Activated T-helper 2 cell treated with anti-CD3 and anti-CD28 coated beads, Interferon-gamma antibody, Interleukin-2, Interleukin-4, amounts not matched to agents 10 μg/mL and 5 μg/mL and 100 μg/mL, durations not matched to agents 14 hours and 24 hours and 36 hours (primary cell): ENCODE measurements at regions of chr3 and their contacts with region 1.

Region 1: DNA sequence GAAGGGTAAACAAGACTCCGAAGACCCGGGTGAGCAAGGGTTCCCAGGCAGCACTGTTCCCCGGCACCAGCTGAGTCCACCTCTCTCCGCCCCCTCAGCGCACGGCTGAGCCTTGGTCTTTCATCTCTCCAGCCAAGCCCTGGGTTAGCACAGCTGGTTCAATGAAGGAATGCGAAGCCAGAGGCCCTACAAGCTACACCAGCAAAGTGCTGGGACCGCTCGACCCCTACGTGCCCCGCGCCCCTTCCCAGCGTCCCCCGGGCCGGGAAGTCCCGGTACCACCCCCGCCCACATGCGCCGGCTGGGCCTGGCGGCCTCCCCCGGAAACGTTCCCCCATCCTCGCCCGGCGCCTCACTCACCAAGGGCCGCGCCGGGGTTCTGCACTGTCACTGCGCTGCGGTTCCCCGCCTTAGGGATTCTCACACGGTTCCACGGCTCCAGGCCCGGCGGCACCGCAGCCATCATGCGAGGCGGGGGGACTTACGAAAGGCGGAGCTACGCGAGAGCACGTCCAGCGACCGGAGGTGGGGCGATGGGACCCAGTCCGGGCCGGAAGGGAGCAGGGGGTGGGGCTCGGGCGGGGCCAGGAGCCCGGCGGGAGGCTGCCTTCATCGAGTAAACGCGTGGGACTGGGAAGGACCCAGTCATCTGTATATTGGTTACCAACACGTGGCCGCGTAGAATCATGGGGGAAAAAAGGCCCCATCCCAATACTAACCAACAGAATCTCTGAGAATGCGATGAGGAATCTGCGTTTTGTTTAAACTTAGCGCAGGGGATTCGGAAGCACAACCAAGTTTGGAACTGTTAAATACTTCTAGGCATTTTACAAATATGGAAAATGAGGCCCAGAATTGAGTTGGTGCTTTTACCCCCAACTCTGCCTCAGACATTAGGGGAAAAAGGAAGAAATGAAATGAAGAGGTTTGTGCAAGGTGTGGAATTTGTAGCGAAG is 28.7 kb downstream of the GTPBP8 start:
- DNase-seq: peak; percentile 73
- H3K4me3 Mint-ChIP-seq: peak overlapping the region; percentile 93
- H3K27ac Mint-ChIP-seq: peak overlapping the region; percentile 94
- H3K4me1 Mint-ChIP-seq: peaks cover 38% of the 10 kb centered on the region
- H3K27me3 Mint-ChIP-seq: no peaks in the 10 kb centered on the region

Region 2: DNA sequence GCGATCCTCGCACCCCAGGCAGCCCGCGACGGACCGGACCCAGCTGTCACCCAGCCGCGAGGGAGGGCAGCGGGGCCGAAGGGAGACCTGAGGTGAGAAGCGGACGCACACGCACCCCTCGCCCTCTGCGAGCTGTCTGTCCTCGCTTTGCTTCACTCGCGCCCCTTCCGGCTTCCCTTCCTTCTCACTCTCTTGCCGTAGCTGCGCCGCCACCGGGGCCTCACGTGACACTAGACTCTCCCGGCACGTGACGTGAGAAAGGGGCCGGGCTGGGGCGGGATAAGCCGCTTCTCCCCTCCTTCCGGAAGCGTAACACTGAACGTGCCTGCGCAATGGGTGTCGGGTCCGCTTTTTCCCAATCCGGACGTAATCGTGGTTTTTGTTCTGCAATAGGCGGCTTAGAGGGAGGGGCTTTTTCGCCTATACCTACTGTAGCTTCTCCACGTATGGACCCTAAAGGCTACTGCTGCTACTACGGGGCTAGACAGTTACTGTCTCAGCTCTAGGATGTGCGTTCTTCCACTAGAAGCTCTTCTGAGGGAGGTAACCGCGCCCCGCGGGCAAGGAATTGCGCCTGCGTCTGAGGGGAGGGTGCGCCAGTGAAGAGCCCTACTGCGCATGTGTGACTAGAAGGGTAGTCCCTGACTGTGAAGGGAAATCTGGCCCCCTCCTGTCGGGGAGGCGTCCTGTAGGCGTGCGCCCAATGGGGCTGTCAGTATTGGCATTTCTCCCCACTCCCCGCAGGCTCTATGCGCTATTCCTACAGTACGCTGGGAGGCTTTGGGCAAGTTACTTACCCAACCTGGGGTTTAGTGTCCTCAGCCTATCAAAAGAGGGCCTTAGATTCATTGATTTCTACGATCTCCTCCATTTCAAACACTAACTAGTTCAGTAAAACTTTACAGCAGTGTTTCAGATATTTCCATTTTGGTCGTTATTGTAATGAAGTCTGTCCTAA is 457.4 kb before region 1 on chr3 and contains the starts of genes ATG3 and SLC35A5:
- intact Hi-C with region 1: loop called (anchors 1 kb)
- DNase-seq: peak; percentile 98
- H3K4me3 Mint-ChIP-seq: peak within 1 kb of the TSS; percentile 92
- H3K27ac Mint-ChIP-seq: peak within 1 kb of the TSS; percentile 99
- H3K4me1 Mint-ChIP-seq: peaks cover 49% of the 10 kb centered on the region
- H3K27me3 Mint-ChIP-seq: no peaks in the 10 kb centered on the region
- total RNA-seq, gene ATG3: 61.1 and 61.6 TPM in 2 replicates
- total RNA-seq, gene SLC35A5: 12.6 and 17.8 TPM in 2 replicates

Region 3: GRCh38 chr3:112990672-112991602 is 28.5 kb before region 1 on chr3 and contains the start of gene GTPBP8:
- intact Hi-C with region 1: loop called (anchors 1 kb)
- DNase-seq: peak; percentile 79
- H3K4me3 Mint-ChIP-seq: peak within 1 kb of the TSS; percentile 80
- H3K27ac Mint-ChIP-seq: peak within 1 kb of the TSS; percentile 84
- H3K4me1 Mint-ChIP-seq: peaks cover 49% of the 10 kb centered on the region
- H3K27me3 Mint-ChIP-seq: no peaks in the 10 kb centered on the region
- total RNA-seq, gene GTPBP8: 17.6 and 22.7 TPM in 2 replicates

Region 4: GRCh38 chr3:113005611-113006010 is 13.8 kb before region 1 on chr3:
- intact Hi-C with region 1: loop called (anchors 1 kb)
- DNase-seq: no peak
- H3K4me3 Mint-ChIP-seq: peak overlapping the region; percentile 66
- H3K27ac Mint-ChIP-seq: peak overlapping the region; percentile 84
- H3K4me1 Mint-ChIP-seq: peaks cover 66% of the 10 kb centered on the region
- H3K27me3 Mint-ChIP-seq: no peaks in the 10 kb centered on the region

Region 5: GRCh38 chr3:113057117-113057516 is 37.7 kb after region 1 on chr3:
- intact Hi-C with region 1: no loop called
- DNase-seq: no peak
- H3K4me3 Mint-ChIP-seq: no peak overlapping the region
- H3K27ac Mint-ChIP-seq: no peak overlapping the region
- H3K4me1 Mint-ChIP-seq: peaks cover 4% of the 10 kb centered on the region
- H3K27me3 Mint-ChIP-seq: no peaks in the 10 kb centered on the region

Region 6: GRCh38 chr3:113745273-113746068 is 726.0 kb after region 1 on chr3:
- intact Hi-C with region 1: loop called (anchors 1 kb)
- DNase-seq: peak; percentile 73
- H3K4me3 Mint-ChIP-seq: peak overlapping the region; percentile 96
- H3K27ac Mint-ChIP-seq: peak overlapping the region; percentile 100
- H3K4me1 Mint-ChIP-seq: peaks cover 64% of the 10 kb centered on the region
- H3K27me3 Mint-ChIP-seq: peaks cover 3% of the 10 kb centered on the region